Activated CD8-positive, alpha-beta T cell treated with anti-CD3 and anti-CD28 coated beads, Interleukin-2, amount 10 ng/mL, durations not matched to agents 7 days and 5 days (primary cell): ENCODE measurements at regions of chr2 and their contacts with region 1.

Region 1: DNA sequence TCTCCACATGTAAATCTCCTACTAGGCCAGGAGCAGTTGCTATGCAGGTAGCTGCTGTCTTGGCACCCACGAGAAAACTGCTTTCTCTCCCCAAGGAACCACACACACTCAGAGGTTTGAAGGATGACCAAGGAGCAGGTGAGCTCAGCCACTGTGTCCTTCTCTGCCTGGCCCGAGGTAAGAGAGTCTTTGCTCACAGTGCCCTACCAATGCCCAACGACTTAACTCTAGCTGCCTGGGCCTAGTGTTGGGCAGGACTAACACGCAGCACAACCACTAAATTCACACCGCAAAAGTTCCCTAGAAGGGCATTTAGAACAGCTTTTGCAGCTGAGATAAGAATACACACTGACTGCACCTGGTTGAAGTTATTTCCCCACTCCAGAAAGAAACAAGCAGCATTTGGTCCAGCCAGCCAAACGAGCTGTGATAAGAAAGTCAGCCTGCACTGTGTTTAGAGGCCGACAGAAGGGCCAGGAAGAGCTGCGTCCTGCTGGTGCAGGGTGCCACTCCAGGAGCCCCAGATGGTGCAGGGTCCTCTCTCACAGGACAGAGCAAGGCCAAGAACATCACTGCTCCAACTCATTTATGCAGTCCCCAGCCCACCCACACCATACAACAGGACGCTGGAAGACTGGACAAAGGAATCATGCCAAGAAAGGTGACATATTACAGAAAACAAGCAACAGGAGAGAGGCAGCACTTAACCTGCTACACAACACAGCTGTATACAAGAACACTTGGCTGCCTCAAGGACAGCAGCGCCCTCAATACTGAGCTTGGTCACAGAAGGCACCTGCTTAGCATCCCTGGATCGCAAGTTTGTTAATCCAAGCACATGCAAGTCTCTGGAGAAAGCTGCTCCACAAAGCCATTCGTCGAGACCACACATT is 12.5 kb downstream of the HDLBP start:
- DNase-seq: no peak
- ATAC-seq: no peak
- H3K4me3 Mint-ChIP-seq: no peak overlapping the region
- H3K27ac Mint-ChIP-seq: no peak overlapping the region
- H3K4me1 Mint-ChIP-seq: peaks cover 51% of the 10 kb centered on the region
- H3K27me3 Mint-ChIP-seq: no peaks in the 10 kb centered on the region

Region 2: DNA sequence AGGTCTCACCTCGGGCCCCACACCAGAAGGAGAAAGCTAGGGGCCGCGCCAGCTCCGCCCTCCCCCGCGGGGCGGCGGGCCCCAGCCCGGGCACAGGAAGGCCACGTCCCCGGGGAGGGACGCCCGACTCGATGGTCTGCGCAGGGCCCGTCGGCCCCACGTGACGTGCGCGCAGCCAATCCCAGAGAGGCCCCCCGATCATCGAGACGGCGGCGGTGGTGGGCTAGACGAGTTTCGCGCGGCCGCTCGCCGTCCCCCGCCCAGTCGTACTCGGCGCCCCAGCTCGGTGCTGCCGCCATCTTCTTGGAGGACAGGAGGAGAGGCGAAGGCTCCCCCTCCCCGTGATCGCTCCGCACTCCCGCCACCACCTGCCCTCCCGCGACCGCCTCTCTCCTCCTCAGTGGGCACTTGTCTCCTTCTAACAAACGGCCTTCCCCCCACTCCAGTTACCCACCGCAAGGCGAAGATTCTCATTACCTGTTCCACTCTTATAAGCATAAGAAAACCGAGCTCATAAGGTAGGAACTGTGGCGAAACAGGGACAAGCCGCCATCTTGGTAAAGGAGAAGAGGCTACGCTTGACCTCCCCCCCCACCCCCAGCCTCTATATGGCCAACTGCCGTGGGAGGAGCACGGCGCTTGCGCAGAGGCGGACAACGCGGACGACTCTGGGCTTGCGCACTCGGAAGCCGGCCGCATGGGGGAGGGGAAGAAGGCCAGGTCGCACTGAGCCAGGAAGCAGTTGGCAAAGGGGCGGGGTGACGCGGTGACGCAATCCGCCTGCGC is 12.3 kb after region 1 on chr2 and contains the start of gene HDLBP:
- CTCF ChIA-PET with region 1: interaction called, 5 read pairs
- POLR2A ChIA-PET with region 1: interaction called, 24 read pairs
- DNase-seq: peak; percentile 100
- ATAC-seq: peak; percentile 80
- H3K4me3 Mint-ChIP-seq: peak within 1 kb of the TSS; percentile 100
- H3K27ac Mint-ChIP-seq: peak within 1 kb of the TSS; percentile 100
- H3K4me1 Mint-ChIP-seq: peaks cover 70% of the 10 kb centered on the region
- H3K27me3 Mint-ChIP-seq: no peaks in the 10 kb centered on the region
- total RNA-seq, gene HDLBP: 186 to 187 TPM